Adrenal gland (tissue), 19 donors: ENCODE measurements at regions of chr6 and their contacts with region 1.

Region 1: DNA sequence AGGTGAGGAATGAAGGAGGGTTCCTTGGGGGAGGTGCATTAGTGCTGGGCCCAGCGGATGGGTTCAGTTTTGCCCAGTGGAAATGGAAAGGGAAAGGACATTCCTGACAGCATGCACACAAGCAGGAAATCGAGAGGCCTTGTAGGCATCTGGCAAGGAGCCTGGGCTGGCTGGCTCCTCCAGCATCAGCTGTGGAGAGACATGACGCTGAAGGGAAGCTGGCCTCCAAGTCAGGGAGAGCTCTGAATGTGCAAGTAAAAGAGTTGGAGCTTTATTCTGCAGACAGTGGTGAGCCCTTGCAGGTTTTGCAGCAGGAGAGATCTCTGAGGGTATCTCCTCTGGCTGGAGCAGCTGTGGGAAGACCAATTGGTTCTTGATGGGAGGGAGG is 154.3 kb downstream of the MRPL14 start:
- DNase-seq: peak; percentile 90 to 97 (median 94)
- H3K4me3 ChIP-seq: no peak overlapping the region
- H3K27ac ChIP-seq: peak overlapping the region in 4 of 5 donors; percentile 7 to 76 (median 36)
- H3K4me1 ChIP-seq: peaks cover 0 to 15% of the 10 kb centered on the region in 2 donors
- H3K27me3 ChIP-seq: no peaks in the 10 kb centered on the region
- CTCF ChIP-seq: no peak
- POLR2A ChIP-seq: peak in 1 of 2 donors; percentile 15

Region 2: GRCh38 chr6:43436577-43437282 is 536.2 kb before region 1 on chr6:
- intact Hi-C with region 1: no loop called
- DNase-seq: peak in 4 of 7 donors; percentile 33 to 68 (median 50)
- H3K4me3 ChIP-seq: no peak overlapping the region
- H3K27ac ChIP-seq: peak overlapping the region in 1 of 5 donors; percentile 21
- H3K4me1 ChIP-seq: peaks cover 9 to 17% of the 10 kb centered on the region in 2 donors
- H3K27me3 ChIP-seq: no peaks in the 10 kb centered on the region
- CTCF ChIP-seq: no peak
- POLR2A ChIP-seq: no peak

Region 3: DNA sequence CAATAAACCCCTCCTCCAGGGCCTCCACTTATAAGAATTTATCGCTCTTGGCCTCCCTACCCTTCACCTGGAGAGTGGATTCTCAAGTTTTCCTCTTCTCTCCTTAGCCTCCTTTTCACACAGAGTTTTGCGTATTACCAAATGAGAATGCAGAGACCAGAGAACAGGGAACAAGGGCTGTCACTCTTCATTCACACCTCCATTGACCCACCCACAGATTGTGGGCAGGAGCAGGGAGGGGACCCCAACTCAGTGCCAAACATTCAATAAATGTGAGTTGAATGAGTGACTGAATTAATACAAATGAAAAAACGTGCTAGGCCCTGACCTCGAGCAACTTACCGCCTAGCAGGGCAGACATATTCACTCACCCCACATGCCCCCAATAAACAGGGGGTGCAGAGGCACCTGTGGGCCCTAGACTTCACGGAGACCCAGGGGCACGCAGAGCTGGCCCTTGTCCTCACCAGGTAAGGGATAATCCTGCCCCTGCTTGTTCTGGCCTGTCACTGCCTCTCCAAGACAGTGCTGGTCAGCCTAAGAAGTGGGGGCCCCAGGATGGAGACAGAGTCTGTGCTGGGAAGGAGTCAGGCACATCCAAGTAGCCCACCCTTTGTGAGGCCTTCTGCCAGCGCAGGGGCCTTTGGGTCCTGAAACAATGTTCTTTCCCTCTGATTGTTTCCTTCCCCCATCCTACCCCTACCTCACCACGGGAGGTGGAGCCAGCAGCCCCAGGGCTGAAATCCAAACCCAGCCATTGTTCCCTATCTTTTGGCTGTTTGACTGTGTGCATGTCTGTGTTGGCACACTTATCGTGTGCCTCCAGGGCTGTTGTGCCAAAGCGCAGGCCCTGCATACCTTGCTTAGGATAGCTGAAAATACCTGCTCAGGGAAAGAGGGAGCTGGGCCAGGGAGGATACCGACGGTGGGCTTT is 503.9 kb before region 1 on chr6:
- intact Hi-C with region 1: no loop called
- DNase-seq: no peak
- H3K4me3 ChIP-seq: no peak overlapping the region
- H3K27ac ChIP-seq: no peak overlapping the region
- H3K4me1 ChIP-seq: no peaks in the 10 kb centered on the region
- H3K27me3 ChIP-seq: no peaks in the 10 kb centered on the region
- CTCF ChIP-seq: no peak
- POLR2A ChIP-seq: no peak

Region 4: DNA sequence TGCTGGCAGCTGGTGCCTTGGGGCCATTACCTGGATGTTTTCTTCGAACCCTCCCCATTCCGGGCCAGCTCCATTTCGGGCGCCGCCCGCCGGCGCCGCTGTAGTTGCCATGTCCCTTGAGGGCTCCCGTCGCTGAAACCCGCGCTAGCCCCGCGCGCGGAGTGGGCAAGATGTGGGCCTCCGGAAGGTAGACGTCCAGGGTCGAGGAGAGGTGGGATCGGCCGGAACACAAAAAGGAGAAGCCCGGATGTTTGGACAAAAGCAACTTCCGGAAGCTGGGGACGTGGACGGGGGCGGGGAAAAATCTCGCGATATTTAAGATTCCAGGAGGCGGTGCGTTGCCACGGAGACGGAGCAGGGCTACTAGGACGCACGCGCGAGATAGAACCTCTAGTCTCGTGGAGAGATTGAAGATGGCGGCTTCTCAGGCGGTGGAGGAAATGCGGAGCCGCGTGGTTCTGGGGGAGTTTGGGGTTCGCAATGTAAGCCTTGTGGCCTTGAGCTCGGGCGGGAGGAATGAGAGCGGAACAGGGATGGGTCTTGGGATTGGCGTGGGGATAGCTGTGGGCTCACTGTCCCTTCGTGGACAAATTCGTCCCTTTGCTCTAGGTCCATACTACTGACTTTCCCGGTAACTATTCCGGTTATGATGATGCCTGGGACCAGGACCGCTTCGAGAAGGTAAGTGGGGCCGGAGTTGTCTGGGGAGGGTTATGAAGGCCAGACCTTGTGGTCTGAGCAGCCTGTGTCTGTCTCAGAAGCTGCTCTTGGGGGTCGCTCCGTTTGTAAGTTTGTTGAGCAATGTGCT is 456.0 kb before region 1 on chr6 and contains the starts of genes POLR1C and YIPF3:
- intact Hi-C with region 1: no loop called
- DNase-seq: peak; percentile 98 to 99 (median 99)
- H3K4me3 ChIP-seq: peak within 1 kb of the TSS; percentile 38 to 82 (median 76)
- H3K27ac ChIP-seq: peak within 1 kb of the TSS in 4 of 5 donors; percentile 77 to 86 (median 81)
- H3K4me1 ChIP-seq: peaks cover 17 to 33% of the 10 kb centered on the region in 2 donors
- H3K27me3 ChIP-seq: no peaks in the 10 kb centered on the region
- CTCF ChIP-seq: no peak
- POLR2A ChIP-seq: peak in 1 of 2 donors; percentile 63
- total RNA-seq, gene POLR1C: 16.8 to 54.4 (median 30.3) TPM
- total RNA-seq, gene YIPF3: 121 to 271 (median 170) TPM

Region 5: DNA sequence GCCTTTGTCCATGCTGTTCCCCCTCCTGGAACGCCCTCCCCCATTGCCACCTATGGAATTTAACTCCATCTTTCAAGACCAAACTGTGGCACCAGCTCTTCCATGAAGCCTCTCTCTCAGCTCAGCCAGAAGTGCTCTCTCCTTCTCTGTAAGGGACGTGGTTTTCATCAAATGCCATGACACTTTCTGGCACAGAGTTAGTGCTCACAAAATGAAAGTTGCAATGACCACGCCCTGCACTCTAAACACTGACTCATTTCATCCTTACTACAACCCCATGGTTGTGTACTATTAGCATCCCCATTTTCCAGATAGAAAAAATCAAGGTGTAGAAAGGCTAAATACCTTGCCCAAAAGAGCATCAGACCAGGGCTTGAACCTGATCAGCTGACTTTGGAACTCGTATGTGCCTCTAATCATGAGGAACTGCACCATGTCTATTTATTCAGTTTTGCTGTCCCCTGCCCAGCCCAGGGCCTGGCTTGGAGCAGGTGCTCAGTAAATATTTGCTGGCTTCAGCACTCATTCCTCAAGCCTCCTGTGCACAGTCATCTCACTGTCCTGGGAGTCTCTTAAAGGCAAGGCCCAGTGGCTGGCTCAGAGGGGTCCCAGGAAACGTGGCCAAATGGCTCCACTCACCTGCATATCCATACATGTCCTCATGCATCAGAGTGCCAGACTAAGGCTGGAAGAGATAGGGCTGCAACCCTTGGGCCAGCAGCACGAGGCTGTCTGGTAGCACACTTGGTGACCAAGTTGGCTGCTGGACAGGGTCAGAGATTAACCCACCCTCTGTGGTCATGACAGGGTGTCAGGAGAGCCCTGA is 76.5 kb after region 1 on chr6:
- intact Hi-C with region 1: loop called in 1 of 2 experiments (anchors 5 kb)
- DNase-seq: peak in 1 of 7 donors; percentile 12
- H3K4me3 ChIP-seq: no peak overlapping the region
- H3K27ac ChIP-seq: peak overlapping the region in 1 of 5 donors; percentile 4
- H3K4me1 ChIP-seq: peaks cover 4 to 10% of the 10 kb centered on the region in 2 donors
- H3K27me3 ChIP-seq: no peaks in the 10 kb centered on the region
- CTCF ChIP-seq: no peak
- POLR2A ChIP-seq: no peak

Region 6: DNA sequence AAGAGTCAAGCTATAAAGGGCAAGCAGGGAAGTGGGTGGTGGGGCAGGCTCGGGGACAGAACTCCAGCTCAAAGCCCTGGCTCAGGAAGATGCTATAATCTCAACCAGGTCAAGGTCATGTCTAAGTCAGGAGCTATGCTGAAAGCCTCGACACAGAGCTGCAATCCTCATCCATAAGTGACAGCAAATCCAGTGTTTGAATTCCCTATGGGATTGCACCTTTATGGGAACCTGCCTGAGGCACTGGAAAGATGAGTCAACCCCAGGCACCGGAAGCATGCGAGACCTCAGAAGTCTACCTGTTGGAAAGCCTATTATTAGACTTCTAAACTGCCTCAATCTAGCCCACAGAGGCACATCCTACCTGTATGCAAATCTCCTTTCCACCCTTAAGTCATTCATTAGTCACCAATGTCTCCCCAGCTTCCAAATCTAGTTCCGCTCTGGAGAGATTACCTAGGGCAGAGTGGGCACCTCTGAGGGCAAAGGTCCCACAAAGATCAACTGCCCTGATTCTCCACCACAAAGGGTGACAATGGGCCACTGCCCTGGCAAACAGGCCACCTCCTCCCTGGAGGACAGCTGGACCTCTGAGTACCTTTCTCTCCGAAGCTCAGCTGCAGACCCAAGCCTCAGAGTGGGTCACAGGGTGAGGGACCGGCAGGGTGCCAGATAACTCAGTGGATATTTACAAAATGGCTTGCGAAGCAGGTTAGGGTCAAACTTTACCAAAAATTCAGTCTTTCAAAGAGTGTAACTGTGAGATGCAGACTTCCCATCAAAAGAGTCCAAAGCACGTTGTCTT is 701.6 kb after region 1 on chr6:
- intact Hi-C with region 1: no loop called
- DNase-seq: no peak
- H3K4me3 ChIP-seq: no peak overlapping the region
- H3K27ac ChIP-seq: no peak overlapping the region
- H3K4me1 ChIP-seq: no peaks in the 10 kb centered on the region
- H3K27me3 ChIP-seq: no peaks in the 10 kb centered on the region
- CTCF ChIP-seq: no peak
- POLR2A ChIP-seq: no peak